Mammary epithelial cell (primary cell): ENCODE measurements at regions of chr15 and their contacts with region 1.

Region 1: GRCh38 chr15:74768771-74769342 is 13.0 kb upstream of the CSK start:
- DNase-seq: no peak
- H3K4me3 ChIP-seq: no peak overlapping the region
- H3K27ac ChIP-seq: no peak overlapping the region
- H3K4me1 ChIP-seq: peaks cover 4% of the 10 kb centered on the region
- H3K27me3 ChIP-seq: no peaks in the 10 kb centered on the region
- CTCF ChIP-seq: peak; percentile 76 to 82

Region 2: GRCh38 chr15:74373731-74374647 is 394.9 kb before region 1 on chr15:
- CTCF ChIA-PET with region 1: interaction called, 3 read pairs
- dilution Hi-C with region 1: loop called (anchors 5 kb)
- in situ Hi-C with region 1: loop called (anchors 10 to 25 kb)
- intact Hi-C with region 1: loop called (anchors 1 kb)
- DNase-seq: peak; percentile 91
- H3K4me3 ChIP-seq: peak overlapping the region; percentile 58 to 79 (median 68)
- H3K27ac ChIP-seq: no peak overlapping the region
- H3K4me1 ChIP-seq: peaks cover 20% of the 10 kb centered on the region
- H3K27me3 ChIP-seq: no peaks in the 10 kb centered on the region
- CTCF ChIP-seq: peak; percentile 80 to 89

Region 3: DNA sequence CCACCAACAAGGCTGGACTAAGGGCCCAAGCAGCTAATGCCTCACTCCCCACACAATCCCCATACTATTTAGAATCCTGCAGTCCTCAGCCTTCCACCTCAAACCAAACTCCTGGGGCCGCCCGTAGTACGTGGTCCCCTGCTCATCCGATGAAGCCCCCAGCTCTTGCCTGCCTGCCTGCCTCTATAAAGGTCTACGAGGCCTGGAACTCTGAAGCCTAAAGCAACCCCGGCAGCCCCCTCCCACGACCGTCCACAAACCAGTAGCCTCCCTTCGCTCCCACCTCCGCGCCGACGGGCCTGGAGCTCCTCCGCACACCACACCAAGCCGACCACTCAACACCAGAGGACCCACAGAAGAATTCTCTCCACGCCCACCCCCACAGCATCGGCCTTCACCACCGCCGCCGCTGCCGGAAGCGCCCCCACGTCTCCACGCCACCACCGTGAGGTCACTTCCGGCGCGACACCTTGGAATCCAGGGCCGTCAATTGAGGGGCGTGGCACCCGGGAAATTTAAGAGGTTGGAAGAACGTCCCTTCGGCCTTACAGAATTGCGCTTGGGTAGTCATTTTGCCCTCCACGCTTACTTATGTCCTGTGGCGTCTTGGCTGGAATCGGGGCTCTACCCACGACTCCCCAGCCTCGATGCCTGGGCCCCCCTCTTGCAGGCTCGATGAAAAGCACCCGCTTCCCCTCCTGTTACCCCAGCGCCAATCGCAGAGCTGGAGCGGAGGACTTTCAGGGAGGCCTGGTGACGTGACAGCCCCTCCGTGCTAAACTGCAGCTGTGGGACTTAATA is 73.1 kb before region 1 on chr15 and contains the start of gene EDC3:
- CTCF ChIA-PET with region 1: no interaction called
- dilution Hi-C with region 1: no loop called
- in situ Hi-C with region 1: no loop called
- intact Hi-C with region 1: loop called (anchors 1 kb)
- DNase-seq: peak; percentile 78
- H3K4me3 ChIP-seq: peak within 1 kb of the TSS; percentile 85 to 93 (median 89)
- H3K27ac ChIP-seq: peak within 1 kb of the TSS; percentile 67
- H3K4me1 ChIP-seq: peaks cover 17% of the 10 kb centered on the region
- H3K27me3 ChIP-seq: no peaks in the 10 kb centered on the region
- CTCF ChIP-seq: no peak
- total RNA-seq, gene EDC3: 10.2 to 37.0 TPM

Region 4: GRCh38 chr15:74799856-74800547 is 31.1 kb after region 1 on chr15:
- CTCF ChIA-PET with region 1: interaction called, 8 read pairs
- dilution Hi-C with region 1: no loop called
- in situ Hi-C with region 1: no loop called
- intact Hi-C with region 1: loop called (anchors 1 kb)
- DNase-seq: peak; percentile 95
- H3K4me3 ChIP-seq: peak overlapping the region in 1 of 3 experiments; percentile 12
- H3K27ac ChIP-seq: peak overlapping the region; percentile 91
- H3K4me1 ChIP-seq: peaks cover 28% of the 10 kb centered on the region
- H3K27me3 ChIP-seq: no peaks in the 10 kb centered on the region
- CTCF ChIP-seq: peak; percentile 96 to 100

Region 5: GRCh38 chr15:74854453-74855022 is 85.7 kb after region 1 on chr15:
- CTCF ChIA-PET with region 1: no interaction called
- dilution Hi-C with region 1: loop called (anchors 5 kb)
- in situ Hi-C with region 1: no loop called
- intact Hi-C with region 1: no loop called
- DNase-seq: no peak
- H3K4me3 ChIP-seq: no peak overlapping the region
- H3K27ac ChIP-seq: no peak overlapping the region
- H3K4me1 ChIP-seq: no peaks in the 10 kb centered on the region
- H3K27me3 ChIP-seq: no peaks in the 10 kb centered on the region
- CTCF ChIP-seq: no peak

Region 6: DNA sequence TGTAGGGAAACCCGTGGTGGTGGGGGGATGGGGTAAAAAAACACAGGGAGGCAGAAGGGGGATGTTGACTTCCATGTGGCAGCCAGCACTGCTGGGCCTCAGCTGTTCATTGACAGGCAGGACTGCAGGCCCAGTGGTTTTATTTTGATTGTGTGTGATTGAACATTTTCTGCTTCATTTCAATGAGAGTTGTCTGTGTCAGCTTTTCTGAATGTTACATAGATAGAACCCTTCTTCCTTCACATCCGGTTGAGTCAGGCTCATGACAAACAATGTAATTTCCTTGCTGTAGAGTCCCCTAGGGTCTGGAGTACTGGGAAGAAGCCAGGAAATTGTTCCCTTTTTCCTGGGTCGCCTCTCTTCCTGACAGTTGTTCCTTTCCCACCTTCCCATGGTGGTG is 195.9 kb after region 1 on chr15:
- CTCF ChIA-PET with region 1: no interaction called
- dilution Hi-C with region 1: loop called (anchors 5 kb)
- in situ Hi-C with region 1: no loop called
- intact Hi-C with region 1: no loop called
- DNase-seq: no peak
- H3K4me3 ChIP-seq: no peak overlapping the region
- H3K27ac ChIP-seq: no peak overlapping the region
- H3K4me1 ChIP-seq: peaks cover 6% of the 10 kb centered on the region
- H3K27me3 ChIP-seq: no peaks in the 10 kb centered on the region
- CTCF ChIP-seq: no peak